MCF 10A (cell line): ENCODE measurements at regions of chr6 and their contacts with region 1.

Region 1: GRCh38 chr6:167855825-167856425 is 29.2 kb downstream of the AFDN start:
- DNase-seq: peak; percentile 93
- H3K4me3 Mint-ChIP-seq: no peak overlapping the region
- H3K27ac Mint-ChIP-seq: peak overlapping the region; percentile 80
- H3K4me1 Mint-ChIP-seq: peaks cover 43% of the 10 kb centered on the region
- H3K27me3 Mint-ChIP-seq: no peaks in the 10 kb centered on the region
- CTCF ChIP-seq: no peak

Region 2: DNA sequence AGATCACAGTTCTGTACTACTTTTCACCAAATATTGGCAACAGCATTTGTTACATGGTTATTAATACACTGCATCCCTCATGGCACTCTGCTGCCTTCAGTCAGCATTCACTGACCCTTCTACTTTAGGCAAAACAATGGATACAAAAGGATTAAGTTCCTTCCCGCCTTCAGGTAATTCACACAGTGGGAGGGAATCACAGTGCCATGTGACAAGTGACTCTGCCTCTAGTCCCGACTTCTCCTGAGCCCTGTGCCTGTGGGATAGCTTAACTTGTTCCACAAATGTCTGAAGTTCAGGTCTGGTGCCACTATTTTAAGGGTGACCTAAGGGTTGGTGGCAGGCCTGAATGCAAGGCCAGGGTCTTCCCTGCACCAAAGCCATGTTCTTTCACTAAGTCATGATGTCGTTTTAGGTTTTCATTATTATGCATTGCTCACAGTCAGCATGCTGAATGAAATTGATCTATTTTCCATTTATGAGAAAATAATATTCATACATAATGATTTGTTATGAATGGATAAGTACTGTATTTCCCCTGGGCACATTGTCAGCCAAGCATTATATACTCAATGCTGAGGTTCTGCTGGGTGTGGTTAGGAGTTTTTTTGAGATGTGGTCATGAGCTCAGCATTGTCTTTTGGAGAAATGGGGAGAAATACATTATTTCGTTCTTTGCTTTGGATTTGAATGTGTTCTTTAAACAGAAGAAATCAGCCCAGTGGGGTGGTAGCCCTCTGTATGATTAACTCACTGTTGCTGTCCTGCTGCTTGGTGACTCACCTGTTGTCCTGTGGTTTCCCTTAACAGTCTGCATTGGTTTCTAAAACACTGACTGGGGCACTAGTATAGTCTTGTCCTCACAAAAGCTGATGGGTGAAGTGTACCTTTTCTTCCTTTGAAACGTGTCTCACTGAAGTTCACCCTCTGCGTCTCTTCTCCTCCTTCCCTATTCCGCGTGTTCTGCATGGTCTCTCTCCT is 37.2 kb after region 1 on chr6:
- CTCF ChIA-PET with region 1: interaction called, 5 read pairs
- POLR2A ChIA-PET with region 1: interaction called, 10 read pairs
- intact Hi-C with region 1: no loop called
- DNase-seq: peak; percentile 74
- H3K4me3 Mint-ChIP-seq: no peak overlapping the region
- H3K27ac Mint-ChIP-seq: no peak overlapping the region
- H3K4me1 Mint-ChIP-seq: no peaks in the 10 kb centered on the region
- H3K27me3 Mint-ChIP-seq: no peaks in the 10 kb centered on the region
- CTCF ChIP-seq: no peak